ENCODE measurements at regions of chr6 and their contacts with region 1.

Region 1: GRCh38 chr6:36360241-36361054 is 23.8 kb upstream of the BNIP5 start:
- DNase-seq: peak; percentile 60 to 80
- ATAC-seq: peak; percentile 79 to 93 (median 88)
- H3K4me3 ChIP-seq: no peak overlapping the region
- H3K27ac ChIP-seq: peak overlapping the region in 3 of 10 donors; percentile 16 to 72 (median 30)
- H3K4me1 ChIP-seq: peaks cover 0 to 52% (median 25%) of the 10 kb centered on the region in 9 donors
- H3K27me3 ChIP-seq: peaks cover 0 to 29% (median 4%) of the 10 kb centered on the region in 7 donors
- CTCF ChIP-seq: peak; percentile 76 to 89 (median 84)

Region 2: GRCh38 chr6:36027501-36028087 is 332.9 kb before region 1 on chr6 and contains the start of gene MAPK14:
- intact Hi-C with region 1: loop called in 4 of 10 experiments (anchors 10 kb)
- DNase-seq: peak; percentile 99 to 100
- ATAC-seq: peak; percentile 96 to 98 (median 96)
- H3K4me3 ChIP-seq: peak within 1 kb of the TSS; percentile 82 to 100 (median 96)
- H3K27ac ChIP-seq: peak within 1 kb of the TSS; percentile 84 to 96 (median 94)
- H3K4me1 ChIP-seq: peaks cover 5 to 49% (median 29%) of the 10 kb centered on the region in 9 donors
- H3K27me3 ChIP-seq: peaks cover 0 to 21% (median 18%) of the 10 kb centered on the region in 7 donors
- CTCF ChIP-seq: peak; percentile 86 to 98 (median 91)
- total RNA-seq, gene MAPK14: 25.0 to 38.1 (median 29.4) TPM

Region 3: DNA sequence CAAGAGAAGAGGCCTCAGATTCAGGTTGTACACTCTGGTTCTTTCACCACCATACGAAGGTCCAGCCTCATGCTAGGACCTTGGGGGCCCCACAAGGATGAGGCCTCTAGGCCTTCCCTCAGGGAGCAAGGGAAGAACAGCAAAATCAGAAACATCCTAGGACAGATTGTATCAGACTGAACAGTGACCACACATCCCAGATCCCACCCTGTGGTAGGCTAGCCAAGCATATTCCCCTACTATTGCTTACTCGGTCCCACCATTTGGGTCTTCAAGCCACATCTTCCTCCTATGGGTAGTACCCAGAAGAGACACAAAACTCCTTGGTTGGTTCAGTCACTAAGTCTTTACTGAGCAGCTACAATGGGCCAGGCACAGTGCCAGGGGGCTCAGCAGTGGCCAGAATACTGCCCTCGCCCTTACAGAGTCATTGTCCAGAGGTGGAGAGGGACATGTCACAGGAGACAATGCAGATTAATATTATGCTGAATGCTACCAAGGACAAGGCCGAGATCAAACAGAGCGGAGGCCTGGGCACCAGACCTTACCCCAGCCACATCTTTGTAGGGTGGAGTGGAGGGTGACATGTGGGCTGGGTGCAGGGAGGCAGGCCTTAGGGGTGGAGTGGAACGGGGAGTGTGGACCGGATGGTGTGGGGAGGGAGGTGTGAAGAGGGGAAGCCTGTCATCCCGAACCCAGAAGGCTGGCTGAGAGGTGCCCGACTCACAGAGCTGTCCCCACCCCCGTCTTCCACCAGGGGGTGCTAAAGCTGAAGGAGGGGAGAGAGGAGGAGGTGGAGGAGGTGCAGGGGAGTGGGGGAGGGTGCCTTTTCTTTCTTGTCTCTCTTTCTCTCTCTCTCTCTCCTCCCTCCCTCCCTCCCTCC is 236.9 kb before region 1 on chr6:
- intact Hi-C with region 1: loop called in 8 of 10 experiments (anchors 5 to 10 kb)
- DNase-seq: peak; percentile 73 to 76
- ATAC-seq: peak; percentile 72 to 85 (median 82)
- H3K4me3 ChIP-seq: no peak overlapping the region
- H3K27ac ChIP-seq: peak overlapping the region in 1 of 10 donors; percentile 66
- H3K4me1 ChIP-seq: peaks cover 0 to 90% (median 14%) of the 10 kb centered on the region in 9 donors
- H3K27me3 ChIP-seq: peaks cover 0 to 8% (median under 1%) of the 10 kb centered on the region in 7 donors
- CTCF ChIP-seq: peak; percentile 42 to 70 (median 60)

Region 4: DNA sequence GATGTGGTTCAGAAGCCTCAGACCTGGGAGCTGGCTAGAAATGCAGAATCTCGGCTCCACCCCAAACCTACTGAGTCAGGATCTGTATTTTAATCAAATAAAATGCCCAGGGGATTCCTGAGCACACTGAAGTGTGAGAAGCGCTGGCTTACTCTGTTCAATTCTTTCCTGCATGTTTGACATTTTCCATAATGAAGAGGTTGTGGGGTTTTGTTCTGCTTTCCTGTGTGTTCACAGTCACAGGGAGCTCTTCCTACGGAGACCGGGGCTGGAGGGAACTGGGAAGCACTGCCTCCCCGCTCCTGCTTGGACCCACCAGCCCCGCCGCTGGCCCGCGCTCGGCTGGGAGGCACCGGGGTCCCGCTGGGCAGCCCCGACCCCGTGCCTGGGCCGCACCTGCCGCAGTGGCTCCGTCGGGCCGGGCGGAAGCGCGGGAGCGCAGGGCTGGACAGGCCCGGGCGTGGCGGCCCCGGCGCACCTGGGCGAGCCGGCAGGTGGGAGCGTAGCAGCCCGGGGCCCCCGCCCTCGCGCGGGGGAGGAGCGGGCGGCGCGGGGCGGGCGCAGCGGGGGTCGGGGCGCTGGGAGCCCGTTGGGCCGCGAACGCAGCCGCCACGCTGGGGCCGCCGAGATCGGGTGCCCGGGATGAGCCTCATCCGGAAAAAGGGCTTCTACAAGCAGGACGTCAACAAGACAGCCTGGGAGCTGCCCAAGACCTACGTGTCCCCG is 230.3 kb before region 1 on chr6 and contains the start of gene MAPK13:
- intact Hi-C with region 1: loop called in 7 of 10 experiments (anchors 5 to 10 kb)
- DNase-seq: no peak
- ATAC-seq: peak in 2 of 8 donors; percentile 3 to 27
- H3K4me3 ChIP-seq: peak within 1 kb of the TSS in 9 of 10 donors; percentile 30 to 59 (median 43)
- H3K27ac ChIP-seq: peak within 1 kb of the TSS in 2 of 10 donors; percentile 1 to 90
- H3K4me1 ChIP-seq: peaks cover 0 to 63% (median 14%) of the 10 kb centered on the region in 9 donors
- H3K27me3 ChIP-seq: peaks cover 0 to 37% (median 24%) of the 10 kb centered on the region in 7 donors
- CTCF ChIP-seq: no peak
- total RNA-seq, gene MAPK13: 0.11 to 5.0 (median 0.69) TPM

Region 5: GRCh38 chr6:36296240-36296639 is 64.2 kb before region 1 on chr6:
- intact Hi-C with region 1: loop called in 2 of 10 experiments (anchors 1 to 5 kb)
- DNase-seq: no peak
- ATAC-seq: no peak
- H3K4me3 ChIP-seq: no peak overlapping the region
- H3K27ac ChIP-seq: no peak overlapping the region
- H3K4me1 ChIP-seq: peaks cover 0 to 11% (median 0%) of the 10 kb centered on the region in 9 donors
- H3K27me3 ChIP-seq: peaks cover 0 to 32% (median 18%) of the 10 kb centered on the region in 7 donors
- CTCF ChIP-seq: no peak

Region 6: GRCh38 chr6:36302227-36302976 is 58.0 kb before region 1 on chr6:
- intact Hi-C with region 1: loop called (anchors 1 to 5 kb)
- DNase-seq: peak; percentile 60 to 90
- ATAC-seq: peak; percentile 71 to 88 (median 86)
- H3K4me3 ChIP-seq: no peak overlapping the region
- H3K27ac ChIP-seq: no peak overlapping the region
- H3K4me1 ChIP-seq: peaks cover 0 to 3% (median 0%) of the 10 kb centered on the region in 9 donors
- H3K27me3 ChIP-seq: peaks cover 0 to 38% (median 8%) of the 10 kb centered on the region in 7 donors
- CTCF ChIP-seq: peak; percentile 71 to 93 (median 89)

Region 7: DNA sequence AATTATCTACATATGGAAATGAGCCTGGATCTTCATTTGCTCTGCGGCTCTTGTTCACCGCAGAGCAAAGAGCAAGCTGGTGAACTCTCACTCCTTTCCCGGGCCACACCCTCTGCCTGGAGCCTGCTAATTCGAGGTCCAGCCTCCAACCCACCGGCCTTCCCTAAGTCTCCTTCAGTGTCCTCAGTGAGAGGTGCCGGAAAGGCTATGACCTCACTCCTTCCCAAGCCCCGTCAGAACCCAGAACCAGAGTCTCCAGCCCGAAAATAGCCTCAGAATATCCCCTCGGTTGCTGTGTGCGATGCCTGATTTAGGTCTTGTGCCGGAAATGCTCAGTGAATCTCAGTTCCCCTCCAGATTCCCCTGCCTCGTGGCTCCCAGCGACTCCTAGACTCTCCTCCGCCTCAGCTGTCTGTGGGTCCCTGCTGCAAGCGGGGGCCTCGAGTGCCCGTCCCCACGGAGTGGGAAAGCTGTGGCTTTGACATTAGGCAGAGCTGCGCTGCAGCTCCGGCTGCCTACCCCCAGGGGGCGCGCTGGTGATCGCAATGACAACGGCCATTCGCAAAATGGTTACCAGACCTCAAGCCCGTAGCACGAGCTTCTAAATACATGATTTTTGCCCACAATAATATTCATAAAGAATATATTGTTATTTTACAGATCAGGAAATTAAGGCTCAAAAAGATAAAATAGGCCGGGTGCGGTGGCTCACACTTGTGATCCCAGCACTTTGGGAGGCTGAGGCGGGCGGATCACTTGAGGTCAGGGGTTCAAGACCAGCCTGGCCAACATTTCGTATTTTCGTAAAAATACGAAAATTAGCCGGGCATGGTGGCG is 19.6 kb before region 1 on chr6:
- intact Hi-C with region 1: loop called in 4 of 10 experiments (anchors 1 to 2 kb)
- DNase-seq: peak; percentile 70 to 85
- ATAC-seq: peak; percentile 75 to 92 (median 84)
- H3K4me3 ChIP-seq: peak overlapping the region in 6 of 10 donors; percentile 16 to 31 (median 24)
- H3K27ac ChIP-seq: peak overlapping the region in 4 of 10 donors; percentile 14 to 71 (median 25)
- H3K4me1 ChIP-seq: peaks cover 0 to 13% (median 6%) of the 10 kb centered on the region in 9 donors
- H3K27me3 ChIP-seq: peaks cover 0 to 66% (median 38%) of the 10 kb centered on the region in 7 donors
- CTCF ChIP-seq: peak; percentile 89 to 97 (median 96)

Measured in heart right ventricle (tissue), 16 donors.